B cell (primary cell): ENCODE measurements at regions of chr10 and their contacts with region 1.

Region 1: GRCh38 chr10:132396495-132397035 is 435 bp upstream of the PWWP2B start:
- DNase-seq: peak; percentile 86
- ATAC-seq: peak; percentile 69
- H3K4me3 ChIP-seq: peak overlapping the region in 4 of 5 experiments; percentile 49 to 73 (median 61)
- H3K4me3 Mint-ChIP-seq: no peak overlapping the region
- H3K27ac ChIP-seq: peak overlapping the region; percentile 75 to 89
- H3K27ac Mint-ChIP-seq: no peak overlapping the region
- H3K4me1 ChIP-seq: peaks cover 65 to 69% of the 10 kb centered on the region in 2 donors
- H3K4me1 Mint-ChIP-seq: peaks cover 58% of the 10 kb centered on the region
- H3K27me3 ChIP-seq: no peaks in the 10 kb centered on the region
- H3K27me3 Mint-ChIP-seq: no peaks in the 10 kb centered on the region
- CTCF ChIP-seq: peak; percentile 39

Region 2: DNA sequence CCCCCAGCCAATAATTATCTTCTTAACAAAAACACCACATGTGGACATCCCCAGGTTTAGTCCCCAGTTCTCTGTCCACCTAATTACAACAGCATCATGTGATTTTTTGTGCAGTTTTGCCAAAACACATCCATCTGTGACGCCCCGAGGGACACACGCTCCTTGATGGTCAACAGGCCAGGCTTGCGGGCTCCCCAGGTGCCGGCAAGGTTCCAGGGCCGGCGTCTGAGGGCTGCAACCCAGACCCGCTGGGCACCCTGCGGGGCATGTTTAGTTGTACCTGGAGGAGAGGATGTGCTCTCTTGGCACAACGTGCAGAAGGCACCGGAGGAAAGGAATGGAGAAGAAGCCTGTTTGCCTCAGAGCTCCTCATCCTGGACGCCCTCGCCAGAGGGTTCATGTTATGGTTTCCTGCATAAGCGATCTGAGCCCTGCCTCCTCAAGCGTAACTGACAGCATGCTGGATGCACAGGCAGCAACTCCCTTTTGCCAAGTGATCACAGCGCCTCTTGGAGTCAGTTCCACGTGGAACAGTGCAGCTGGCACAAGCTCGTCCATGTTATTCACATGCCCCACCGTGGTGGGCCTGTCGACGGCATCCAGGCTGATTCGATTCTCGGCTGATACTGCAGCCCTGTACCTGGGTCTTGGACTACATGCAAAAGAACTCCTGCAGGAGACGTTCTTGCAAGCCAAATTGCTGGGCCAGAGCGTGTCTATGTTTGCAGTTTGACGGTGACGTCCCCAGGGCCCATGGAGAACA is 289.2 kb before region 1 on chr10:
- CTCF ChIA-PET with region 1: no interaction called
- POLR2A ChIA-PET with region 1: no interaction called
- intact Hi-C with region 1: no loop called
- DNase-seq: no peak
- ATAC-seq: no peak
- H3K4me3 ChIP-seq: no peak overlapping the region
- H3K4me3 Mint-ChIP-seq: no peak overlapping the region
- H3K27ac ChIP-seq: no peak overlapping the region
- H3K27ac Mint-ChIP-seq: no peak overlapping the region
- H3K4me1 ChIP-seq: no peaks in the 10 kb centered on the region
- H3K4me1 Mint-ChIP-seq: no peaks in the 10 kb centered on the region
- H3K27me3 ChIP-seq: peaks cover 0 to 5% (median 0%) of the 10 kb centered on the region in 4 experiments
- H3K27me3 Mint-ChIP-seq: peaks cover 9% of the 10 kb centered on the region
- CTCF ChIP-seq: no peak

Region 3: GRCh38 chr10:132331526-132332432 is 64.8 kb before region 1 on chr10 and contains the start of gene LRRC27:
- CTCF ChIA-PET with region 1: no interaction called
- POLR2A ChIA-PET with region 1: interaction called, 3 read pairs
- intact Hi-C with region 1: loop called (anchors 2 kb)
- DNase-seq: peak; percentile 100
- ATAC-seq: peak; percentile 78
- H3K4me3 ChIP-seq: peak within 1 kb of the TSS; percentile 81 to 95 (median 90)
- H3K4me3 Mint-ChIP-seq: peak within 1 kb of the TSS; percentile 83
- H3K27ac ChIP-seq: peak within 1 kb of the TSS; percentile 93 to 96
- H3K27ac Mint-ChIP-seq: peak within 1 kb of the TSS; percentile 99
- H3K4me1 ChIP-seq: peaks cover 50 to 60% of the 10 kb centered on the region in 2 donors
- H3K4me1 Mint-ChIP-seq: peaks cover 75% of the 10 kb centered on the region
- H3K27me3 ChIP-seq: no peaks in the 10 kb centered on the region
- H3K27me3 Mint-ChIP-seq: no peaks in the 10 kb centered on the region
- CTCF ChIP-seq: no peak
- total RNA-seq, gene LRRC27: 23.6 and 32.2 TPM in 2 replicates

Region 4: GRCh38 chr10:132421392-132421877 is 24.9 kb after region 1 on chr10:
- CTCF ChIA-PET with region 1: interaction called, 6 read pairs
- POLR2A ChIA-PET with region 1: interaction called, 29 read pairs
- intact Hi-C with region 1: loop called (anchors 2 kb)
- DNase-seq: peak; percentile 75
- ATAC-seq: peak; percentile 29
- H3K4me3 ChIP-seq: peak overlapping the region in 4 of 5 experiments; percentile 17 to 46 (median 24)
- H3K4me3 Mint-ChIP-seq: peak overlapping the region; percentile 79
- H3K27ac ChIP-seq: peak overlapping the region; percentile 92 to 99
- H3K27ac Mint-ChIP-seq: peak overlapping the region; percentile 94
- H3K4me1 ChIP-seq: peaks cover 72 to 76% of the 10 kb centered on the region in 2 donors
- H3K4me1 Mint-ChIP-seq: peaks cover 59% of the 10 kb centered on the region
- H3K27me3 ChIP-seq: no peaks in the 10 kb centered on the region
- H3K27me3 Mint-ChIP-seq: no peaks in the 10 kb centered on the region
- CTCF ChIP-seq: no peak

Region 5: GRCh38 chr10:132446661-132447194 is 50.2 kb after region 1 on chr10:
- CTCF ChIA-PET with region 1: interaction called, 10 read pairs
- POLR2A ChIA-PET with region 1: interaction called, 11 read pairs
- intact Hi-C with region 1: no loop called
- DNase-seq: peak; percentile 78
- ATAC-seq: peak; percentile 48
- H3K4me3 ChIP-seq: peak overlapping the region in 2 of 5 experiments; percentile 12 to 30
- H3K4me3 Mint-ChIP-seq: peak overlapping the region; percentile 68
- H3K27ac ChIP-seq: peak overlapping the region; percentile 72 to 89
- H3K27ac Mint-ChIP-seq: peak overlapping the region; percentile 92
- H3K4me1 ChIP-seq: peaks cover 35 to 58% of the 10 kb centered on the region in 2 donors
- H3K4me1 Mint-ChIP-seq: peaks cover 51% of the 10 kb centered on the region
- H3K27me3 ChIP-seq: no peaks in the 10 kb centered on the region
- H3K27me3 Mint-ChIP-seq: no peaks in the 10 kb centered on the region
- CTCF ChIP-seq: peak; percentile 54

Region 6: GRCh38 chr10:132452631-132453469 is 56.3 kb after region 1 on chr10:
- CTCF ChIA-PET with region 1: interaction called, 15 read pairs
- POLR2A ChIA-PET with region 1: interaction called, 11 read pairs
- intact Hi-C with region 1: loop called (anchors 1 kb)
- DNase-seq: peak; percentile 95
- ATAC-seq: peak; percentile 92
- H3K4me3 ChIP-seq: peak overlapping the region in 2 of 5 experiments; percentile 21 to 45
- H3K4me3 Mint-ChIP-seq: peak overlapping the region; percentile 64
- H3K27ac ChIP-seq: peak overlapping the region; percentile 83 to 84
- H3K27ac Mint-ChIP-seq: peak overlapping the region; percentile 86
- H3K4me1 ChIP-seq: peaks cover 22 to 35% of the 10 kb centered on the region in 2 donors
- H3K4me1 Mint-ChIP-seq: peaks cover 30% of the 10 kb centered on the region
- H3K27me3 ChIP-seq: no peaks in the 10 kb centered on the region
- H3K27me3 Mint-ChIP-seq: no peaks in the 10 kb centered on the region
- CTCF ChIP-seq: peak; percentile 91

Region 7: GRCh38 chr10:132571650-132572535 is 175.3 kb after region 1 on chr10:
- CTCF ChIA-PET with region 1: no interaction called
- POLR2A ChIA-PET with region 1: no interaction called
- intact Hi-C with region 1: loop called (anchors 5 kb)
- DNase-seq: peak; percentile 88
- ATAC-seq: peak; percentile 77
- H3K4me3 ChIP-seq: peak overlapping the region in 3 of 5 experiments; percentile 10 to 20 (median 11)
- H3K4me3 Mint-ChIP-seq: no peak overlapping the region
- H3K27ac ChIP-seq: peak overlapping the region; percentile 85 to 86
- H3K27ac Mint-ChIP-seq: no peak overlapping the region
- H3K4me1 ChIP-seq: peaks cover 49 to 59% of the 10 kb centered on the region in 2 donors
- H3K4me1 Mint-ChIP-seq: peaks cover 20% of the 10 kb centered on the region
- H3K27me3 ChIP-seq: no peaks in the 10 kb centered on the region
- H3K27me3 Mint-ChIP-seq: no peaks in the 10 kb centered on the region
- CTCF ChIP-seq: peak; percentile 64

Region 8: DNA sequence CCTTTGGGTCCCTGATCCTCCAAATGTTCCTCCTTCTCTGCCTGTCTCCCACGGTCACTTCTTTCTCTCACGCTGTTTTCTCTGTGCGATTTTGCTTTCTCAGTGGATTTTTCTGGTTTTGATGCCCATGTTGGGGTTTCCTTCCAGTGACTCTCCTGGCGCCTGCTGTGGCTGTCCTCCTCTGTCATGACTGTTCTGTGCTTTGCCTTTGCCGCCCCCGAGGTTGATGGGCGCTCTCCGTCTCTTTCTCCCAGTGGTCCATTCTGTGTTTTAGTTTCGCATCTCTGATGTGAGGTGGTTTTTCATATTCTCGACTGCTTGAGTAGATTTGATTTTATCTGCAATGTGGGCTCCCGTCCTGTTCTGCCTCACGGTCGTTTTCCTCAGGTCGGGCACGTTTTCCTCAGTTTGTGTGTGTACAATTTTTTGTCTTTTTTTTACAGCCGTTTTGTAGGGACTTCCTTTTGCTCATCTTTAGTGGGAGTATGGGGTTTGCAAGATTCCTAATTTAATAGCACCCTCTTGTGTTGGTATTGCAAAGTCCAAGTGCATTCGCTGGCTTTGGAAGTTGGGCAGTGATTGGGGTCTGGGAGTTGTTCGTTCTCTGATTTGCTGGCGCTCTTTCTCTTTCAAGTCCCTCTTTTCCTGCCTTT is 241.0 kb after region 1 on chr10:
- CTCF ChIA-PET with region 1: no interaction called
- POLR2A ChIA-PET with region 1: no interaction called
- intact Hi-C with region 1: loop called (anchors 5 kb)
- DNase-seq: peak; percentile 79
- ATAC-seq: peak; percentile 55
- H3K4me3 ChIP-seq: no peak overlapping the region
- H3K4me3 Mint-ChIP-seq: peak overlapping the region; percentile 37
- H3K27ac ChIP-seq: no peak overlapping the region
- H3K27ac Mint-ChIP-seq: peak overlapping the region; percentile 64
- H3K4me1 ChIP-seq: peaks cover 29 to 30% of the 10 kb centered on the region in 2 donors
- H3K4me1 Mint-ChIP-seq: peaks cover 36% of the 10 kb centered on the region
- H3K27me3 ChIP-seq: no peaks in the 10 kb centered on the region
- H3K27me3 Mint-ChIP-seq: no peaks in the 10 kb centered on the region
- CTCF ChIP-seq: peak; percentile 75